Activated naive CD4-positive, alpha-beta T cell treated with anti-CD3 and anti-CD28 coated beads for 36 hours (primary cell): ENCODE measurements at regions of chr3 and their contacts with region 1.

Region 1: GRCh38 chr3:77038468-77038929 is 1.4 kb upstream of the ROBO2 start:
- DNase-seq: peak; percentile 23
- H3K4me3 Mint-ChIP-seq: no peak overlapping the region
- H3K27ac Mint-ChIP-seq: no peak overlapping the region
- H3K4me1 Mint-ChIP-seq: peaks cover 2% of the 10 kb centered on the region
- H3K27me3 Mint-ChIP-seq: peaks cover 42% of the 10 kb centered on the region

Region 2: DNA sequence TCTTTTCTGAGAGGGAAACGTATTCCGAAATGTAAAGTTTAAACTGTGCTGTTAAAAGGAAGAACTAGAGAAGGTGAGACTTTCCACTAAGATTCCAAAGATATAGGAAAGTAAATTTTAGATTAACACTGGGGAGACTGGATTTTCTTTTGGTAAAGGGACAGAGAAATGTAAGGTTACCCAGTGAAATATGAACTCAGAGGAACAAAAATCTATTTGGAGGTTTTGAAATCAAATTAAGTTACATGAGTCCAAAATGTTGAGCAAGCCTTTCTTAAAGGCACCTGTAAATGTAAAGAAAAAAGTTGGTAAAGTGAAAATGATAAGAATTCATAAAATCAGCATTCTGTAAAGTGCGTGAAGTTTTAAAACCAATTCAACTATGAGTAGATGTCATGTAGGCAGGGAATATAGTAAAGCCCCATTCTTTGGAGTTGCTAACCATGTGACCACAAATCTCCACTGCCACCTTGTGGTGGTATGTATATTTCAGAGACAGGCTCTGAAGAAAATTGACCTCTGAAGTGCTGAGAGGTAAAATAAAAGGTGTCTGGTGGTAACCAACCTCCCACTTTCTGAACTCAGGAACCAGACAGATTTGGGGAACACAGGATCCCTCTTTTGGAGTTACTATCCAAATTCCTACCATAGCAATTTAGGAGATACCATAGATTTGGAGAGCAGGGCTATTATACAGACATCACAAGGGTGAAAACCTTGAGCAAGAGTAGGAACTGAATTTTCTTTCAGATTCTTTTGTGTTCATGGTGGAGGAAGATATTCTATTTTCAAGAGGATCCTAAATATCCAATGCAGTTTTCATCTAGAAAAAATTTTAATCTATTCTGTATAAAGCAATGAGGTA is 216.7 kb after region 1 on chr3:
- CTCF ChIA-PET with region 1: no interaction called
- intact Hi-C with region 1: loop called (anchors 1 kb)
- DNase-seq: peak; percentile 23
- H3K4me3 Mint-ChIP-seq: no peak overlapping the region
- H3K27ac Mint-ChIP-seq: no peak overlapping the region
- H3K4me1 Mint-ChIP-seq: no peaks in the 10 kb centered on the region
- H3K27me3 Mint-ChIP-seq: no peaks in the 10 kb centered on the region

Region 3: GRCh38 chr3:77320514-77320913 is 282.0 kb after region 1 on chr3:
- CTCF ChIA-PET with region 1: no interaction called
- intact Hi-C with region 1: loop called (anchors 1 kb)
- DNase-seq: no peak
- H3K4me3 Mint-ChIP-seq: no peak overlapping the region
- H3K27ac Mint-ChIP-seq: no peak overlapping the region
- H3K4me1 Mint-ChIP-seq: no peaks in the 10 kb centered on the region
- H3K27me3 Mint-ChIP-seq: no peaks in the 10 kb centered on the region

Region 4: GRCh38 chr3:78645628-78646310 is 1607.3 kb after region 1 on chr3:
- CTCF ChIA-PET with region 1: no interaction called
- intact Hi-C with region 1: loop called (anchors 2 kb)
- DNase-seq: no peak
- H3K4me3 Mint-ChIP-seq: no peak overlapping the region
- H3K27ac Mint-ChIP-seq: no peak overlapping the region
- H3K4me1 Mint-ChIP-seq: no peaks in the 10 kb centered on the region
- H3K27me3 Mint-ChIP-seq: no peaks in the 10 kb centered on the region